IMR-90 (cell line): ENCODE measurements at regions of chr11 and their contacts with region 1.

Region 1: DNA sequence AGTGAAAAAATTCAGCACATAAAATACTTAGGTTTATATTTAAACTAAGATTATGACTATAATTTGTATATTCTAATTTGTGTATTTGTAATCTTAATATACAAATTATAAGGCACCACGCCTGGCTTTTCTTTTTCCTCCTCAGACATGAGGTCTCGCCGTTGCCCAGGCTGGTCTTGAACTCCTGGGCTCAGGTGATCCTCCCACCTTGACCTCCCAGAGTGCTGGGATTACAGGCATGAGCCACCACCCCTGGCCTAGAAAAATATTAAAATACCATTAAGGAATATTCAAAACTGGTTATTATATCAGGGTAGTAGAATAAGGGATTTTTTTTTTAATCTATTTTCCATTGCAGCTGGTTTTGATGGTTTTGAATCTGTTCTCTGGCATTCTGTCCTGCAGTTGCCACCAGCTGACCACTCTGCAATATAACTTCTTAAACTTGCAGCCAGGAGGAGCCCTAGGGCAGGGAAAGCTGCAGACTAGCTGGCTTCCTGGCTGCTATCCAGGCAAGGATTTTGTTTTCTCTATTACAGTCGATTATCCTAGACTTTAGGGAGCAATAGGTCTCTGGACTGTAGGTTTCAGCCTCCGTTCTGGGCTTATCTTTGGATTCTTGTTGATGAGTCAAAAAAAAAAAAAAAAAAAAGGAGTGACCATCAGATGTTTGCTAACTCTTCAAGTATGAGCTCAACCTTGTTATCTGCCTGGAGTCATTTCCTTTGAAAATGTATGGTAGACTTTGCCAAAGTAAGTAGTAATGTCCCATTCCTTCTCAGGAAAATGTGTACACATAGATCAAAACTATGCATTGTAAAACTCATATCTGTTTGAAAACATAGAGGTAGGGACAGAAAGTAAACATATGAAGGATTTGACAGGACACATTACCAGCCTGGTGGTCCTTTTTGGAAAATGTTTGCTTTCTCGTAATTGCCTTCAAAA is 13.2 kb downstream of the POLA2 start:
- DNase-seq: peak; percentile 99
- ATAC-seq: peak; percentile 89
- H3K4me3 ChIP-seq: peak overlapping the region; percentile 1; the same call in 1 of the 2 replicates
- H3K27ac ChIP-seq: peak overlapping the region; percentile 36; the same call in 1 of the 2 replicates
- H3K4me1 ChIP-seq: peaks cover 19% of the 10 kb centered on the region
- H3K27me3 ChIP-seq: no peaks in the 10 kb centered on the region
- CTCF ChIP-seq: peak; percentile 98
- POLR2A ChIP-seq: peak; percentile 67
- RAD21 ChIP-seq: peak; percentile 99

Region 2: DNA sequence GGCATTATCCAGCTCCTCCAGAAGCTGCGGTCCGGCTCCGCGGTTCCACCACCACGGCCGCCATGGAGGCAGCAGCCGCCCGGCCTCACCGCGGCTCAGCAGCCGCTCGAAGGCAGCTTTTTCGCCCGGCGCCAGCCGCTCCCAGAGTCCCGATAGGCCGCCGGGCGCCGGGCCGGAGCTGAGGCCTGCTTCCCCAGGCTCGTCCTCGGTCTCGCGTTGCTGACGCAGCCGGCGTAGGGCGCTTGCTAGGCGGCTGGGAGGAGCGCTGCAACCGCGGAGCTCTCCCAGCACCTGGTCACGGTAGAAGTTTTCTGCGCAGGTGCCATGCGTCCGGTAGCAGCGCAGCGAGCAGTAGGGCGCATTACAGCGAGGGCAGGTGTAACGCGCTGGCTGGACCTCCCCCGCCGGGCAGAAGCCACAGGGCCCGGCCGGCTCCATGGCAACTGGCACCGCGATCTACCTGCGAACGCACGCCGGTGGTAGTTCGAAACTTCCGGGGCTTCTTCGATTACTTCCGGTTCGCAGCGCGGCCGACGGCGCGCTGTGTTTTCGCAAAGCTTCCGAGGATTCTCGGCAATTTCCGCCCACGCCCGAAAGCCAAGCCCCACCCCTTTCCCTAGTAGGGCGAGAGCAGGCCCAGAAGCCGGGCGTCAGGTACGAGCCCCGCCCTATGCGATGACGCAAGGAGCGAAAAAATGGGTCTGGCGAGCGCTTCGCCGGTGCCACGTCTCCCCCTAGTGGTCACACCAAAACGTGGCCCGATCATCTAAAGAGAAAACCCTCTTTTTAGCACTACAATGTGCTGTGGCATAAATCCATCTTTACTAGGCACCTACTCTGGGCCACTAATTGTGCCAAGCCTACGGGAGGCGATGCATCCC is 157.6 kb before region 1 on chr11 and contains the start of gene ZNHIT2:
- CTCF ChIA-PET with region 1: no interaction called
- POLR2A ChIA-PET with region 1: interaction called, 20 read pairs
- dilution Hi-C with region 1: no loop called
- in situ Hi-C with region 1: no loop called
- intact Hi-C with region 1: no loop called
- DNase-seq: peak; percentile 98
- ATAC-seq: peak; percentile 78
- H3K4me3 ChIP-seq: peak within 1 kb of the TSS; percentile 69
- H3K27ac ChIP-seq: peak within 1 kb of the TSS; percentile 47
- H3K4me1 ChIP-seq: peaks cover 14% of the 10 kb centered on the region
- H3K27me3 ChIP-seq: no peaks in the 10 kb centered on the region
- CTCF ChIP-seq: peak; percentile 98
- POLR2A ChIP-seq: peak; percentile 78
- RAD21 ChIP-seq: peak; percentile 90
- total RNA-seq, gene ZNHIT2: 3.6 and 3.9 TPM in 2 replicates

Region 3: GRCh38 chr11:65261591-65262380 is 13.2 kb before region 1 on chr11 and contains the start of gene POLA2:
- CTCF ChIA-PET with region 1: interaction called, 10 read pairs
- POLR2A ChIA-PET with region 1: no interaction called
- dilution Hi-C with region 1: no loop called
- in situ Hi-C with region 1: no loop called
- intact Hi-C with region 1: no loop called
- DNase-seq: peak; percentile 95
- ATAC-seq: peak; percentile 92
- H3K4me3 ChIP-seq: peak within 1 kb of the TSS; percentile 71
- H3K27ac ChIP-seq: peak within 1 kb of the TSS; percentile 91
- H3K4me1 ChIP-seq: peaks cover 5% of the 10 kb centered on the region
- H3K27me3 ChIP-seq: no peaks in the 10 kb centered on the region
- CTCF ChIP-seq: no peak
- POLR2A ChIP-seq: peak; percentile 92
- RAD21 ChIP-seq: no peak
- total RNA-seq, gene POLA2: 12.2 and 14.2 TPM in 2 replicates

Region 4: DNA sequence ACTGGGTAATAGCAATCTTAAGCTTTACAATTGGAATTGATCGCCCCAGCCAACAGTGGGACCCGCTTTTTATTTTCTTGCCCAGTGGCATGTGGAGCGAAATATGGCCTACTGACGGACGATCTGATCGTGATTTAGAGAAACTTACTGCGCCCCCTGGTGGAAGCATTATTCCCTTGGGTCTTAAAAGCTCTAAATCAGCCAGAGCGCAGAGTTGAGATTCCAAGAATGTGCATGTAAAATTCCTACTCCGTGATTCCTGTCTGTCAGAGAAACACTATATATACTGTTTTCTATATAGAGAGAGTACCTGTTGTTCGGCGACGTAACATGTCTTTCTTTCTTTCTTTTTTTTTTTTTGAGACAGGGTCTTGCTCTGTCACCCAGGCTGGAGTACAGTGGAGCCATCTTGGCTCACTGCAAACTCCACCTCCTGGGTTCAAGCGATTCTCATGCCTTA is 55.0 kb after region 1 on chr11:
- CTCF ChIA-PET with region 1: interaction called, 74 read pairs
- POLR2A ChIA-PET with region 1: interaction called, 20 read pairs
- dilution Hi-C with region 1: no loop called
- in situ Hi-C with region 1: no loop called
- intact Hi-C with region 1: loop called (anchors 1 kb)
- DNase-seq: peak; percentile 92
- ATAC-seq: peak; percentile 28
- H3K4me3 ChIP-seq: no peak overlapping the region
- H3K27ac ChIP-seq: no peak overlapping the region
- H3K4me1 ChIP-seq: no peaks in the 10 kb centered on the region; the same call in 1 of the 2 replicates
- H3K27me3 ChIP-seq: no peaks in the 10 kb centered on the region
- CTCF ChIP-seq: peak; percentile 85
- POLR2A ChIP-seq: peak; percentile 56
- RAD21 ChIP-seq: peak; percentile 68

Region 5: GRCh38 chr11:66056501-66056900 is 781.5 kb after region 1 on chr11:
- CTCF ChIA-PET with region 1: no interaction called
- POLR2A ChIA-PET with region 1: no interaction called
- dilution Hi-C with region 1: no loop called
- in situ Hi-C with region 1: no loop called
- intact Hi-C with region 1: no loop called
- DNase-seq: no peak
- ATAC-seq: no peak
- H3K4me3 ChIP-seq: no peak overlapping the region
- H3K27ac ChIP-seq: no peak overlapping the region
- H3K4me1 ChIP-seq: peaks cover 2% of the 10 kb centered on the region
- H3K27me3 ChIP-seq: no peaks in the 10 kb centered on the region
- CTCF ChIP-seq: no peak
- POLR2A ChIP-seq: no peak
- RAD21 ChIP-seq: no peak